Activated CD4-positive, alpha-beta memory T cell treated with anti-CD3 and anti-CD28 coated beads, Interleukin-2, amount 10 ng/mL, durations not matched to agents 7 days and 5 days (primary cell): ENCODE measurements at regions of chr11 and their contacts with region 1.

Region 1: GRCh38 chr11:121451986-121452608 is at the start of gene SORL1:
- DNase-seq: peak; percentile 78
- H3K4me3 Mint-ChIP-seq: peak within 1 kb of the TSS; percentile 94
- H3K27ac Mint-ChIP-seq: peak within 1 kb of the TSS; percentile 90
- H3K4me1 Mint-ChIP-seq: peaks cover 86% of the 10 kb centered on the region
- H3K27me3 Mint-ChIP-seq: no peaks in the 10 kb centered on the region
- total RNA-seq, gene SORL1: 115 to 116 TPM

Region 2: DNA sequence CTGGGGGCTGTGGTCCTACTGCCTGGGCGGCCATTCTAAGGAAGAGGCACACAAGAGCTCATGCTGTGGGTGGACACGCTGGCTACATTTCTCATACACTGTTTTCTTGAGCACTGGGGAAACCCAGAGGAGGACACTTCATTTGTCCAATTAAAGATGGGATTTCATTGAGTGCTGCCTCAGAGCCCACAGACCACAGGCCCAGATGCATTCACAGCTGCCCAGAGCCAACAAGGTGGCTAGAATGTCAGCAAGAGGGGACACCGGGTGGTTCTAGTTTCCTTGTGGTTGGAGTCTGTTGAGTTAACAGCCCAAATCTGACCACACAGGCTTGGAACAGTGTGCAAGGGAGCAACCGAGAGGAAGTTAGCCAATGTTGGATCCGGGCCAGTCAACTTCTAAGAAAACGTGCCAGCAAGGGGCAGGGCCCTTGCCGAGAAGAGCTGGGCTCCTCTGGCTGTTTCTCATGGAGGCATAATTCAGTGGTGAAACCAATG is 35.0 kb before region 1 on chr11:
- CTCF ChIA-PET with region 1: interaction called, 12 read pairs
- POLR2A ChIA-PET with region 1: interaction called, 55 read pairs
- DNase-seq: peak; percentile 75
- H3K4me3 Mint-ChIP-seq: no peak overlapping the region
- H3K27ac Mint-ChIP-seq: peak overlapping the region; percentile 84
- H3K4me1 Mint-ChIP-seq: peaks cover 68% of the 10 kb centered on the region
- H3K27me3 Mint-ChIP-seq: no peaks in the 10 kb centered on the region

Region 3: GRCh38 chr11:121464352-121464946 is 12.4 kb after region 1 on chr11:
- CTCF ChIA-PET with region 1: interaction called, 91 read pairs
- POLR2A ChIA-PET with region 1: interaction called, 187 read pairs
- DNase-seq: peak; percentile 86
- H3K4me3 Mint-ChIP-seq: peak overlapping the region; percentile 38
- H3K27ac Mint-ChIP-seq: peak overlapping the region; percentile 99
- H3K4me1 Mint-ChIP-seq: peaks cover 98% of the 10 kb centered on the region
- H3K27me3 Mint-ChIP-seq: no peaks in the 10 kb centered on the region

Region 4: GRCh38 chr11:121494355-121495099 is 42.4 kb after region 1 on chr11:
- CTCF ChIA-PET with region 1: interaction called, 11 read pairs
- POLR2A ChIA-PET with region 1: interaction called, 3 read pairs
- DNase-seq: peak; percentile 25
- H3K4me3 Mint-ChIP-seq: peak overlapping the region; percentile 5
- H3K27ac Mint-ChIP-seq: peak overlapping the region; percentile 55
- H3K4me1 Mint-ChIP-seq: peaks cover 28% of the 10 kb centered on the region
- H3K27me3 Mint-ChIP-seq: no peaks in the 10 kb centered on the region

Region 5: DNA sequence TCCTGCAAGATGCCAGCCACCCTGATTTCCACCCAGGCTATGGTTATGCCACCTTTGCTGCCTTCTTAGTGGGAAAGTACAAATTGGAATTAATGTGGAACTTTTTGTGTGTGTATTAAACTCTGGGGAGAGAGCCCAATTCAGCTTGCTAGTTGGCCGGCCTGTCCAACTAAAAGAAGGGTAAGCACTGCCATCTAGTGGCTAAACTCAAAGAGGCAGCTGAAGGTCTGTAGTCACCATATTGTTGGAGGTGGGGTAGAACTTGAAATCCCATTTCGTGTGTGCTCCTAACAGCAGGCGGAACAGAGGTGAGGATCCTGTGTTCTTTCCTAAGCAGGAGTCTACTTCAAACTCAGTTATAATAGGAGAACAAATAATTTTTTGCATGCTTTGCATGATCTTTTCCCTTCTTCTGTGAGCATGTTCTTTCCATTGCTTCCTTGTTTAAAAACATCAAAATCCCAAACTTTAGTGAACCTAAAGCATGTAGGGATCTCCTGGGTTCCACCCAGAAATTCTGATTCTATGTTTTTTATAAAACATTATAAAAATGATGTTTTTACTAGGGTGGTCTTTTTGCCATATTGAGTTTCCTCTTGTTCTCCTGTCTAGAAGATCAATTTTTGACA is 139.4 kb after region 1 on chr11:
- CTCF ChIA-PET with region 1: interaction called, 10 read pairs
- POLR2A ChIA-PET with region 1: no interaction called
- DNase-seq: peak; percentile 73
- H3K4me3 Mint-ChIP-seq: no peak overlapping the region
- H3K27ac Mint-ChIP-seq: peak overlapping the region; percentile 47
- H3K4me1 Mint-ChIP-seq: peaks cover 28% of the 10 kb centered on the region
- H3K27me3 Mint-ChIP-seq: no peaks in the 10 kb centered on the region

Region 6: DNA sequence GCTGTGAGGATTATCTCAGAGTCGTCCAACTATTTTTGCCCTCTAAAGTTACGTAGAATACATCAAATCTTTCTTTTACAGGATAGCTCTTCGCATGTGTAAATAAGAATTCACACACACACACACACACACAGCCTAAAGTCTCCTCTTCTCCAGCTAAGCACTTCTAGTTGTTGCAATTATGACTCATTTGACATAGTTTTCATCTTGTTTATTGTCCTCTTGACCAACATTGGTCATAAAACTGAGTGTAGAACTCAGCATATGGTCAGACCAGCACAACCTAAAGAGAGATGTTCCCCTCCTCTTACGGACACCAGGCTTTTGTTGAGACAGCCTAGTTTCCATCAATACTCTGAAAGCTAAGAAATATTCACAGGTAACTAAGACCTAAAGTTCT is 429.7 kb after region 1 on chr11:
- CTCF ChIA-PET with region 1: no interaction called
- POLR2A ChIA-PET with region 1: no interaction called
- DNase-seq: no peak
- H3K4me3 Mint-ChIP-seq: no peak overlapping the region
- H3K27ac Mint-ChIP-seq: no peak overlapping the region
- H3K4me1 Mint-ChIP-seq: no peaks in the 10 kb centered on the region
- H3K27me3 Mint-ChIP-seq: no peaks in the 10 kb centered on the region